Mammary epithelial cell (primary cell): ENCODE measurements at regions of chr2 and their contacts with region 1.

Region 1: DNA sequence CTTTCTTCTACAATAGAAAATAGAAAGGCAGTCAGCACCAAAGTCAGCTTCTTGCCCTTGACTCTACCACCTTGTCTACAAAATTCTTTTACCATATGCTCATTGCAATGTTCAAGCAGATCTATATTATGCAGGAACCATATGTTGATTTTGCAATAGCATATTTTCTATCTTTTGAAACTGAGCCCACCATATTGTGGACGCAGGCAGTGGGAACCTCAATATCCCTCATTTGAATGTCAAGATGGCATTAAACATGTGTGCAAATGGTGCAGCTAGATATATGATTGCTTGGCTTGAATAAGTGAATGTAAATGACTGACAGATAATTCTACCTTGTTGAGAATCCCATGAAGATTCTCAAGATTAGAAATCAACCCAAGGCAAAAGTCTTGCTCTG is 412.7 kb upstream of the FSHR start:
- DNase-seq: no peak
- H3K4me3 ChIP-seq: no peak overlapping the region
- H3K27ac ChIP-seq: no peak overlapping the region
- H3K4me1 ChIP-seq: no peaks in the 10 kb centered on the region
- H3K27me3 ChIP-seq: no peaks in the 10 kb centered on the region
- CTCF ChIP-seq: no peak

Region 2: DNA sequence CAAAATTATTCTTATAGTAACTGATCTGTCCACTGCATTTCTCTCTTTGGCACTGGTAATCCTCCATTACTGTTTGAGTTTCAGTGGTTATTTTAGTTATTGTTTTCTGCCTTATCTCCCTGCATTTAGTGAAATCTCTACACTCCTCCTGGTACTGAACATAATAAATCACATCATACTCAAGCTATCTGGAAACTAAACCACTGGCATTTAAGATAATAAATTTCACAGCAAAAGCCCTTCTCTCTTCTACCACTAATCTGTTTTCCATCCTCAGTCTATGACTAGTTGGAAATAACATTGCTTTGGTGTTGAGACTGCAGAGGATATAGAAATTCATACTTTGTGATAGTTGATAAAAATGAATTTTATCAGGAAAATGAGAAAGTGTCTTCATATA is 13.4 kb before region 1 on chr2:
- CTCF ChIA-PET with region 1: no interaction called
- dilution Hi-C with region 1: no loop called
- in situ Hi-C with region 1: no loop called
- intact Hi-C with region 1: loop called (anchors 1 kb)
- DNase-seq: no peak
- H3K4me3 ChIP-seq: no peak overlapping the region
- H3K27ac ChIP-seq: no peak overlapping the region
- H3K4me1 ChIP-seq: no peaks in the 10 kb centered on the region
- H3K27me3 ChIP-seq: no peaks in the 10 kb centered on the region
- CTCF ChIP-seq: no peak